ENCODE measurements at regions of chr1 and their contacts with region 1.

Region 1: DNA sequence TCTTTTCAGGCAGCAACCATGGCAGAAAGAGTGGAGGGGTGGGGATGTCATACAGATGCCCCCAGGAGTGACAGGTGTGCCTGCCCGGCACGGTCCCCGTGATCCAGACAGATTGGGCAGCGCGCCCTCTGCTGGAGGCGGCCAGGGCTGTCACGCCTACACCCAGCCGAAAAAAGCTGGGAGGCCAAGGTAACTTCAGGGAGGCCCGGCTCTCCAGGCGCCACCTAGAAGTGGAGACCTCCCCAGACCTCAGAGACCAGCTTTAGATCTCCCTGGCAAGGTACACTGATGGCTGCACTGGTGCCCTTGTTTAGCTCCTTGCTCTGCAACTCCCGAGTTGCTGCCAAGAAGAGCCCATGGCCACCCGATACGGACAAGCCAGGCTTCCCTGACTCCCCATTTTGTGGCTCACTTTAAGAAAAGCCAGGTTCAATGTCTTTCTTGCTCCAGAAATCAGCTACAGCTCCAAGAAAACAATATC is 6.6 kb downstream of the GOLT1A start:
- DNase-seq: peak; percentile 71
- ATAC-seq: peak; percentile 78
- H3K4me3 ChIP-seq: no peak overlapping the region
- H3K4me3 Mint-ChIP-seq: no peak overlapping the region
- H3K27ac ChIP-seq: no peak overlapping the region
- H3K27ac Mint-ChIP-seq: no peak overlapping the region
- H3K4me1 ChIP-seq: peaks cover 0 to 6% of the 10 kb centered on the region in 2 donors
- H3K4me1 Mint-ChIP-seq: no peaks in the 10 kb centered on the region
- H3K27me3 ChIP-seq: peaks cover 0 to 21% (median 13%) of the 10 kb centered on the region in 4 experiments
- H3K27me3 Mint-ChIP-seq: peaks cover 32% of the 10 kb centered on the region
- CTCF ChIP-seq: peak; percentile 92

Region 2: GRCh38 chr1:203304919-203305808 is 902.0 kb before region 1 on chr1 and contains the start of gene BTG2:
- CTCF ChIA-PET with region 1: no interaction called
- POLR2A ChIA-PET with region 1: no interaction called
- intact Hi-C with region 1: no loop called
- DNase-seq: peak; percentile 96
- ATAC-seq: peak; percentile 80
- H3K4me3 ChIP-seq: peak within 1 kb of the TSS; percentile 96 to 99 (median 99)
- H3K4me3 Mint-ChIP-seq: peak within 1 kb of the TSS; percentile 99
- H3K27ac ChIP-seq: peak within 1 kb of the TSS; percentile 100
- H3K27ac Mint-ChIP-seq: peak within 1 kb of the TSS; percentile 99
- H3K4me1 ChIP-seq: peaks cover 65 to 78% of the 10 kb centered on the region in 2 donors
- H3K4me1 Mint-ChIP-seq: peaks cover 70% of the 10 kb centered on the region
- H3K27me3 ChIP-seq: no peaks in the 10 kb centered on the region
- H3K27me3 Mint-ChIP-seq: no peaks in the 10 kb centered on the region
- CTCF ChIP-seq: no peak
- total RNA-seq, gene BTG2: 505 and 508 TPM in 2 replicates

Region 3: GRCh38 chr1:204162231-204163074 is 44.7 kb before region 1 on chr1:
- CTCF ChIA-PET with region 1: interaction called, 5 read pairs
- POLR2A ChIA-PET with region 1: no interaction called
- intact Hi-C with region 1: loop called (anchors 1 kb)
- DNase-seq: peak; percentile 78
- ATAC-seq: peak; percentile 92
- H3K4me3 ChIP-seq: no peak overlapping the region
- H3K4me3 Mint-ChIP-seq: no peak overlapping the region
- H3K27ac ChIP-seq: no peak overlapping the region
- H3K27ac Mint-ChIP-seq: no peak overlapping the region
- H3K4me1 ChIP-seq: no peaks in the 10 kb centered on the region
- H3K4me1 Mint-ChIP-seq: no peaks in the 10 kb centered on the region
- H3K27me3 ChIP-seq: peaks cover 0 to 17% (median 3%) of the 10 kb centered on the region in 4 experiments
- H3K27me3 Mint-ChIP-seq: peaks cover 32% of the 10 kb centered on the region
- CTCF ChIP-seq: peak; percentile 98

Region 4: DNA sequence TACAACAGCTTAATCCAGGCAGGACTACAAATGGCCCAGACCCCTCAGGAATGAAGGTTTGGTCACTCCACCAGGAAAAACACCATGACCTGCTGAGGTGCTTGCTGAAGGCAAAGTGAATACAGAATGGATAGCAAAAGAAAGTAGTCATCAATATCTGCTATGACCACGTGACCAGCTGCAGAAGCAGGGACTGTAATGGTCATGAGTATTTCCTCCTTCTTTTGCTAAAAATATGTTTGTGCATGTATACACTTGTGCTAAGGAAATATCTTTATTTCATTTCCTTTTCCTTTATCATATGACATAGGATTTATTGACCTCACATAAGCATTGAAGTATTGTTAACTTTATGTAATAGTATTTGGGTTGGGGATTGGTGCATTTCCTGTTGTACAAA is 33.1 kb after region 1 on chr1:
- CTCF ChIA-PET with region 1: no interaction called
- POLR2A ChIA-PET with region 1: no interaction called
- intact Hi-C with region 1: no loop called
- DNase-seq: no peak
- ATAC-seq: no peak
- H3K4me3 ChIP-seq: no peak overlapping the region
- H3K4me3 Mint-ChIP-seq: no peak overlapping the region
- H3K27ac ChIP-seq: no peak overlapping the region
- H3K27ac Mint-ChIP-seq: no peak overlapping the region
- H3K4me1 ChIP-seq: no peaks in the 10 kb centered on the region
- H3K4me1 Mint-ChIP-seq: no peaks in the 10 kb centered on the region
- H3K27me3 ChIP-seq: no peaks in the 10 kb centered on the region
- H3K27me3 Mint-ChIP-seq: peaks cover 13% of the 10 kb centered on the region
- CTCF ChIP-seq: no peak

Measured in B cell (primary cell).